ENCODE measurements at regions of chr2 and their contacts with region 1.

Region 1: GRCh38 chr2:170610615-170611014 is 104.5 kb upstream of the SP5 start:
- DNase-seq: no peak
- ATAC-seq: no peak
- H3K4me3 ChIP-seq: no peak overlapping the region
- H3K4me3 Mint-ChIP-seq: no peak overlapping the region
- H3K27ac ChIP-seq: no peak overlapping the region
- H3K27ac Mint-ChIP-seq: no peak overlapping the region
- H3K4me1 ChIP-seq: no peaks in the 10 kb centered on the region
- H3K4me1 Mint-ChIP-seq: no peaks in the 10 kb centered on the region
- H3K27me3 ChIP-seq: no peaks in the 10 kb centered on the region
- H3K27me3 Mint-ChIP-seq: peaks cover 8% of the 10 kb centered on the region in 2 donors

Region 2: GRCh38 chr2:170651624-170652325 is 41.2 kb after region 1 on chr2:
- CTCF ChIA-PET with region 1: interaction called in 1 of 2 experiments, 10 read pairs
- POLR2A ChIA-PET with region 1: no interaction called
- DNase-seq: peak; percentile 2 to 86 (median 40)
- ATAC-seq: peak; percentile 96 to 100 (median 100)
- H3K4me3 ChIP-seq: no peak overlapping the region
- H3K4me3 Mint-ChIP-seq: peak overlapping the region in 1 of 3 donors; percentile 55
- H3K27ac ChIP-seq: no peak overlapping the region
- H3K27ac Mint-ChIP-seq: no peak overlapping the region
- H3K4me1 ChIP-seq: peaks cover 16 to 20% of the 10 kb centered on the region in 2 experiments
- H3K4me1 Mint-ChIP-seq: peaks cover 31 to 33% (median 32%) of the 10 kb centered on the region in 3 donors
- H3K27me3 ChIP-seq: peaks cover 0 to 2% of the 10 kb centered on the region in 2 experiments
- H3K27me3 Mint-ChIP-seq: peaks cover 2 to 11% of the 10 kb centered on the region in 2 donors

Measured in T-cell (primary cell).